WTC11 (cell line): ENCODE measurements at regions of chr5 and their contacts with region 1.

Region 1: DNA sequence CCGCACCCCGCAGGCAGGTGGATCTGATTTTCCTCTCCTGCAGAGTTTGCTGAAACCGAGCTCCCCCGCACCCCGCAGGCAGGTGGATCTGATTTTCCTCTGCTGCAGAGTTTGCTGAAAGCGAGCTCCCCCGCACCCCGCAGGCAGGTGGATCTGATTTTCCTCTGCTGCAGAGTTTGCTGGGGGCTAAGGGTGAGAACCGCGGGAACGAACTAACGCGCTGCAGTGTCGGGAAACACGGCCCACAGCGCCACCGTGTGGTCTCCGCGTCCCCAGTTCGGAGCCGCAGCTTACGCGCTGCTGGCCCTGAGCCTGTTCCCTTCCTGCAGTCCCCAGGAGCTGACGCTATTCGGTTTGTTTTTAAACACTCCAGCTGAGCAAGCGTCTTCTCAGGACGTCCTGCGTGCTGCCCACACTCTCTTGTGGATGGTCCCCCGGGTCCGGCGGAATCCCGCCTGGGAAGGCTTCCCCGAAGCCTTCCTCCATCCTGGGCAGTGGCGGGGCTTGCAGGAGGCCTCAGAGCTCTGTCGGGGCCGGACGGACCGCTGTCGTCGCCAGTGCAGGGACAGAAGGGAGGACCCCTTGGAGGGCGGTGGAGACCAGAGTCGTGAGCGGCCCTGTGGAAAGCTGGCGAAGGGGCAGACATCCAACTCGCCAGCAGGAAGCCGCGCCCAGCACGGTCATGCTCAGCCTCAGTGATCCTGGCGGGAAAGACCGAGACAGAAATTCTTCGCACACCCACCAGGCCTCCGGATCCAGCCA is 121.2 kb upstream of the LPCAT1 start:
- DNase-seq: peak; percentile 88
- ATAC-seq: peak; percentile 85
- H3K4me3 Mint-ChIP-seq: peak overlapping the region; percentile 65
- H3K27ac Mint-ChIP-seq: no peak overlapping the region
- H3K4me1 Mint-ChIP-seq: peaks cover 25% of the 10 kb centered on the region
- H3K27me3 Mint-ChIP-seq: peaks cover 67% of the 10 kb centered on the region
- CTCF ChIP-seq: peak; percentile 81; the same call in 1 of the 2 replicates

Region 2: GRCh38 chr5:1217596-1218206 is 427.3 kb before region 1 on chr5:
- CTCF ChIA-PET with region 1: no interaction called
- POLR2A ChIA-PET with region 1: no interaction called
- DNase-seq: no peak
- ATAC-seq: peak; percentile 66
- H3K4me3 Mint-ChIP-seq: no peak overlapping the region
- H3K27ac Mint-ChIP-seq: no peak overlapping the region
- H3K4me1 Mint-ChIP-seq: no peaks in the 10 kb centered on the region
- H3K27me3 Mint-ChIP-seq: no peaks in the 10 kb centered on the region; the same call in 1 of the 2 replicates
- CTCF ChIP-seq: no peak

Region 3: DNA sequence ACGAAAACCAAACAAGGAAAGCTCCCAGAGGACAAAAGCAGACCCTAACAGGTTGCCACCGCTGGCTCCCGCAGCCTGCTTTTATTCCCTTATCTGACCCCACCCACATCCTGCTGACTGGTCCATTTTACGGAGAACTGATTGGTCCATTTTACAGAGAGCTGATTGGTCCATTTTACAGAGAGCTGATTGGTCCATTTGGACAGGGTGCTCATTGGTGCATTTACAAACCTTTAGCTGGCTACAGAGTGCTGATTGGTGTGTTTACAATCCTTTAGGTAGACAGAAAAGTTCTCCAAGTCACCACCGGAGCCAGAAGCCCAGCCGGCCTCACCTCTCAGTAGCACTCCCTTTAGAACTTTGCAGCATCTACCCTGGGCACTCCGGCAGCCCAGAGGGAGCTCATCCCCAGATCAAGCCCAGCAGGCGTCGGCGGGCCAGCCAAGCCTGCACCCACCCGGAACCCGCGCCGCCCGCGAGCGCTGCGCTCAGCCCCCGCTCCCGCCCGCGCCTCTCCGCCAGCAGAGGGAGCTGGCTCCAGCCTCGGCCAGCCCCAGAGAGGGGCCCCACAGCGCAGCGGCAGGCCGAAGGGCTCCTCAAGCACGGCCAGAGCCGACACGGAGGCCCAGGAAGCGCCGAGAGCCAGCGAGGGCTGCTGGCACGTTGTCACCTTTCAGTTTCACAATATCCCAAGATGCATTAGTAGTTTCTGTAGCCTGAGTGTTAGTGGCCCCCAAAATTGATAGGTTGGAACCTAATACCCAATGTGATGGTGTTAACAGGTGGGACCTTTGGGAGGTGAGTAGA is 264.8 kb before region 1 on chr5:
- CTCF ChIA-PET with region 1: interaction called, 25 read pairs
- POLR2A ChIA-PET with region 1: no interaction called
- DNase-seq: peak; percentile 76
- ATAC-seq: peak; percentile 95
- H3K4me3 Mint-ChIP-seq: peak overlapping the region; percentile 27; the same call in 1 of the 2 replicates
- H3K27ac Mint-ChIP-seq: no peak overlapping the region
- H3K4me1 Mint-ChIP-seq: peaks cover 1% of the 10 kb centered on the region; the same call in 1 of the 2 replicates
- H3K27me3 Mint-ChIP-seq: peaks cover 52% of the 10 kb centered on the region
- CTCF ChIP-seq: peak; percentile 61; the same call in 1 of the 2 replicates

Region 4: DNA sequence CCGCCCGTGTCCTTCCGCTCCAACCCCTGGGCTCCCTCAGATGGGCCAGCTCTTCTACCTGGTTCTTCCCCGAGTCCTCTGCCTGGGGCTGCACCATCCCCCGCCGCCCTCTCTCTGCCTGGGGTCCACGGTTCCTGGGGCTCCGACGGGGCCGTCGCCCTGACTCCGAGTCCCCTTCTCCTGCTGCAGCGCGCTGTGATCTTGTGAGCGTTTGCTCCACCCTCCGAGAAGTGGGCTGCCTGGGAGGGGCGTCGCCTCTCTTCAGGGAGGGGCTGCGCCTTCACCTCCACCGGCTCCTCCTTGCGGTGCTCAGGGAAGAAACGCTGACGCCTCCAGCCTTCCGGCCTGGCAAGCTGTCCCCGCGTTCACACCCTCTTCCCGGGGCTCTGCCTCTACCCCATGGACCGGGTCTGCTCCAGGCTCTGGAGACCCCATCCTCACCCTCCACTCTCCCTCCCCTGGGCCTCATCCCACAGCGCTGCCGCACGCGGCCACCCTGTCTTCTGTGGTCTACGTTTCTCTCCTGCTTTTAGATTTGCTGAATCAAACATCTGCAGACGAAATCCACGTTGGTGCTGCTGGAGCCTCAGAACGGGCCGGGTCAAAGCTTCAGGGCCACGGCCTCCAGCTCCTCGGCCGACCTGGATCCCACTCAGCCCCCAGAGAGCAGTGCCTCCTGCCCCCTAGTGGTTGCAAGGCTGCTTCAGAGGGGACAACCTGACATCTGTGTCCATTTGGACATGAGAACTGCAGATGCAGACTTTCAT is 177.0 kb before region 1 on chr5:
- CTCF ChIA-PET with region 1: interaction called, 10 read pairs
- POLR2A ChIA-PET with region 1: no interaction called
- DNase-seq: peak; percentile 80
- ATAC-seq: peak; percentile 69
- H3K4me3 Mint-ChIP-seq: no peak overlapping the region
- H3K27ac Mint-ChIP-seq: peak overlapping the region; percentile 91
- H3K4me1 Mint-ChIP-seq: no peaks in the 10 kb centered on the region; the same call in 1 of the 2 replicates
- H3K27me3 Mint-ChIP-seq: no peaks in the 10 kb centered on the region
- CTCF ChIP-seq: peak; percentile 52; the same call in 1 of the 2 replicates

Region 5: GRCh38 chr5:1511651-1512540 is 133.1 kb before region 1 on chr5:
- CTCF ChIA-PET with region 1: interaction called, 14 read pairs
- POLR2A ChIA-PET with region 1: no interaction called
- DNase-seq: peak; percentile 24
- ATAC-seq: no peak
- H3K4me3 Mint-ChIP-seq: no peak overlapping the region
- H3K27ac Mint-ChIP-seq: peak overlapping the region; percentile 96
- H3K4me1 Mint-ChIP-seq: peaks cover 75% of the 10 kb centered on the region
- H3K27me3 Mint-ChIP-seq: no peaks in the 10 kb centered on the region
- CTCF ChIP-seq: no peak

Region 6: GRCh38 chr5:1594357-1595106 is 50.5 kb before region 1 on chr5:
- CTCF ChIA-PET with region 1: interaction called, 25 read pairs
- POLR2A ChIA-PET with region 1: no interaction called
- DNase-seq: peak; percentile 92
- ATAC-seq: peak; percentile 95
- H3K4me3 Mint-ChIP-seq: peak overlapping the region; percentile 64
- H3K27ac Mint-ChIP-seq: no peak overlapping the region
- H3K4me1 Mint-ChIP-seq: peaks cover 26% of the 10 kb centered on the region
- H3K27me3 Mint-ChIP-seq: no peaks in the 10 kb centered on the region
- CTCF ChIP-seq: no peak

Region 7: GRCh38 chr5:1668141-1668721 is 23.2 kb after region 1 on chr5:
- CTCF ChIA-PET with region 1: interaction called, 12 read pairs
- POLR2A ChIA-PET with region 1: no interaction called
- DNase-seq: peak; percentile 53
- ATAC-seq: peak; percentile 70
- H3K4me3 Mint-ChIP-seq: peak overlapping the region; percentile 62
- H3K27ac Mint-ChIP-seq: no peak overlapping the region
- H3K4me1 Mint-ChIP-seq: peaks cover 23% of the 10 kb centered on the region
- H3K27me3 Mint-ChIP-seq: peaks cover 41% of the 10 kb centered on the region
- CTCF ChIP-seq: no peak